A673 (cell line): ENCODE measurements at regions of chr2 and their contacts with region 1.

Region 1: DNA sequence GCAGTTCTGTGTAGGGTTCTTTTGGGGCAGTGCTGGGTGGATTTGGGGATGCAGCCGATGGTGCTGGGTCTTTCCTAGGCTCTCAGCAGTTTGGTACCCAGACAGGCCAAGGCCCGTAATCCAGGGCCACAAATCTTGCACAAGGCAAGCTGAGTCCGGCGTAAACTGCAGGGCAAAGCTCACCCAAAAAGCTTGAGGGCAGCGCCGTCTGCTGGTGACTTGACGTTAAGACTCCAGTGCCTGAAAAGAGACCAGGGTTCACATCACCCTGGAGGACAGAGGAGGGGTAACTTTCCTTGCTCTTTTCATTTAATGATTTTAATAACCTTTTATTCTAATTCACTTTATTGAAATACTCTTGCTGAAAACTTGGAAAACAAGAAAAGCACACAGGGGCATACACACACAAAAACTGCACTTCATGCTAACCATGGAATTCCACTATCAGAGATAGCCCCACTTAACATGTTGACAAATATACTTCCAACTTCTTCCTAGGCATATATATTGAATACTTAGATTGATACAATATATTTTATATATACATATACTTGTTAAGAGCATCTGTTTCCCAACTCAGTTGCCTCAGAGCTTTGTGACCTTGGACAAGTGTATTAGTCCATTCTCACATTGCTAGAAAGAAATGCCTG is 38.9 kb downstream of the CNGA3 start:
- DNase-seq: peak; percentile 79
- H3K4me3 ChIP-seq: no peak overlapping the region
- H3K27ac ChIP-seq: no peak overlapping the region
- H3K4me1 ChIP-seq: no peaks in the 10 kb centered on the region
- H3K27me3 ChIP-seq: peaks cover 4% of the 10 kb centered on the region
- CTCF ChIP-seq: peak; percentile 94

Region 2: DNA sequence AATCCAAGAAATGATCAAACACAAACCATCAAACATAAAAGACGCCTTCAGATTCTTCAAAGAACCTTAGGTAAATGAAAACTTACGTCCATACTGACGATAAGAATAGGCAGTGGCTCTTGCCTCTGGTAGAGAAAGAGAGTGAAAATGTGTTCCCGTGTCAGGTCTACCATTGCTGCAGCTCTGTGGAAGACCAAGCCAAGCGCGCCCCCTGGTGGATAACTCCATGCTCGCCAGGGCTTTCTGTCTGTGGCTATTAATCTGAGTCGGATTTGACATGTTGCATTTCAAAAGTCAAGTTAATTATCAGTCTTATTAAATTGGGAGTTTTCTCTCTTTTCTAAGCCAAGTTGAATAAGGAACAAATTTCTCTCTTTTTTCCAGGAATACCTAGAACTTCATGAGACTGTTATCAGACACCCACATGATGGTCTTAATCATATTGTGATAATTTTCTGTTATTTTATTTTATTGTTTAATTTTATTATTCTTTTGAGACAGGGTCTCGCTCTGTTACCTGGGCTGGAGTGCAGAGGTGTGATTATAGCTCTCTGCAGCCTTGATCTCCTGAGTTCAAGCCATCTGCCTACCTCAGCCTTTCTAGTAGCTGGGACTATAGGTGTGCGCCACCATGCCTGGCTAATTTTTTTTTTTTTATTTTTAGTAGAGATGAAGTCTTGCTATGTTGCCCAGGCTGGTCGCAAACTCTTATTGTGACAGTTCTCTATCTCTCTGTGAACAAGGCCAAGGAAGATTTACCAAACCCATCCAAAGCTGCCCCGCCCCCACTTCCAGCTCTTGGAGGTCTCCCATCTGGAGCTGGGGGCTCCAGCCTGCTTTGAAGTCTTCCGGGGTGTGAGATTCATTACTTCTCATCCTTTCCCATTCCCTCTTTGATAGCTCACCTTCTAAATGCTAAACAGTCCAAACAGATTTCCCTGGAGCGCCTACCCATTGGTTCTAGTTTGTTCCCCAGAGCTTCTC is 687.6 kb before region 1 on chr2:
- CTCF ChIA-PET with region 1: interaction called, 9 read pairs
- POLR2A ChIA-PET with region 1: no interaction called
- intact Hi-C with region 1: loop called (anchors 5 kb)
- DNase-seq: peak; percentile 85
- H3K4me3 ChIP-seq: no peak overlapping the region
- H3K27ac ChIP-seq: no peak overlapping the region
- H3K4me1 ChIP-seq: peaks cover 13% of the 10 kb centered on the region
- H3K27me3 ChIP-seq: no peaks in the 10 kb centered on the region
- CTCF ChIP-seq: peak; percentile 92

Region 3: GRCh38 chr2:97740590-97741182 is 644.5 kb before region 1 on chr2:
- CTCF ChIA-PET with region 1: interaction called, 3 read pairs
- POLR2A ChIA-PET with region 1: no interaction called
- intact Hi-C with region 1: loop called (anchors 5 kb)
- DNase-seq: peak; percentile 52
- H3K4me3 ChIP-seq: no peak overlapping the region
- H3K27ac ChIP-seq: no peak overlapping the region
- H3K4me1 ChIP-seq: no peaks in the 10 kb centered on the region
- H3K27me3 ChIP-seq: no peaks in the 10 kb centered on the region
- CTCF ChIP-seq: peak; percentile 84

Region 4: GRCh38 chr2:97806738-97807618 is 578.2 kb before region 1 on chr2:
- CTCF ChIA-PET with region 1: interaction called, 5 read pairs
- POLR2A ChIA-PET with region 1: no interaction called
- intact Hi-C with region 1: loop called (anchors 1 kb)
- DNase-seq: peak; percentile 81
- H3K4me3 ChIP-seq: no peak overlapping the region
- H3K27ac ChIP-seq: no peak overlapping the region
- H3K4me1 ChIP-seq: no peaks in the 10 kb centered on the region
- H3K27me3 ChIP-seq: no peaks in the 10 kb centered on the region
- CTCF ChIP-seq: peak; percentile 94

Region 5: DNA sequence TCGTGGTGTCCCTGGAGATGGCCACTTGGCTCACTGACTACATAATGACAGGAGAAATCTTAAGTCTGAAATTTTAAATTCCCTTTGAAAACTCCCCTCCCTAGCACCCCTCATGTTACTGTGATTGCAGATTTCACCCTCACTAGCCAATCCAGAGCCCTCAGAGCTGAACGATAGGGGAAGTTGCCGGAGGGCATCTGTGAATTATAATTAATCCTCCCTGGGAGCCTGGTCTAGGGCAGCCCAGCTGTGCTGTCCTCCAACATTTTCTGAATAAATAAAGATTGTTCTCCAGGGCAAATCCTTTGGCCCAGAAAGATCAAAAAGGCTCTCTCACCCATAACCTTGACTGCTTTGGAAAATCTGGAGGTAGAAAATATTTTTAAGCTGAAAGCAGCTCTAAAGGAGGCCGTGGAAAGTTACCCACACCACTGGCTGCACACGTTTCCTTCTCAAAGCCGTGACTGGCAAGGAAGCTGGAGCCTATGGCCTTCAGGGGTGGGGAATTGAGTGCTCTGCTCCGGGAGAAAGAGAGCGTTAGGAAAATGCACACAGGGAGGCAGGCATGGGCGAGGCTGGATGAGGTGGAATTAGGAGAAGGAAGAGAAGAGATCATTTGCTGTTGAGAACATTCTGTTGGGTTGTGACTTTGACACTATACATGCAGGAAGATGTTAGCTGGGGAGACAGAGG is 107.9 kb before region 1 on chr2:
- CTCF ChIA-PET with region 1: no interaction called
- POLR2A ChIA-PET with region 1: no interaction called
- intact Hi-C with region 1: no loop called
- DNase-seq: no peak
- H3K4me3 ChIP-seq: no peak overlapping the region
- H3K27ac ChIP-seq: no peak overlapping the region
- H3K4me1 ChIP-seq: peaks cover 11% of the 10 kb centered on the region
- H3K27me3 ChIP-seq: peaks cover 22% of the 10 kb centered on the region
- CTCF ChIP-seq: no peak